ENCODE measurements at regions of chr13 and their contacts with region 1.

Region 1: GRCh38 chr13:109331898-109332297 is 454.5 kb downstream of the IRS2 start:
- DNase-seq: peak in 1 of 2 experiments; percentile 49
- H3K4me3 ChIP-seq: no peak overlapping the region
- H3K27ac ChIP-seq: no peak overlapping the region
- H3K4me1 ChIP-seq: peaks cover 23% of the 10 kb centered on the region
- H3K27me3 ChIP-seq: no peaks in the 10 kb centered on the region
- CTCF ChIP-seq: no peak

Region 2: GRCh38 chr13:109233293-109233692 is 98.6 kb before region 1 on chr13:
- CTCF ChIA-PET with region 1: no interaction called
- POLR2A ChIA-PET with region 1: no interaction called
- intact Hi-C with region 1: no loop called
- DNase-seq: no peak
- H3K4me3 ChIP-seq: no peak overlapping the region
- H3K27ac ChIP-seq: no peak overlapping the region
- H3K4me1 ChIP-seq: no peaks in the 10 kb centered on the region
- H3K27me3 ChIP-seq: no peaks in the 10 kb centered on the region
- CTCF ChIP-seq: no peak

Region 3: GRCh38 chr13:109743706-109744453 is 412.0 kb after region 1 on chr13:
- CTCF ChIA-PET with region 1: no interaction called
- POLR2A ChIA-PET with region 1: no interaction called
- intact Hi-C with region 1: loop called (anchors 10 kb)
- DNase-seq: peak; percentile 82 to 100
- H3K4me3 ChIP-seq: peak overlapping the region; percentile 37
- H3K27ac ChIP-seq: peak overlapping the region; percentile 94
- H3K4me1 ChIP-seq: peaks cover 45% of the 10 kb centered on the region
- H3K27me3 ChIP-seq: no peaks in the 10 kb centered on the region
- CTCF ChIP-seq: no peak

Region 4: DNA sequence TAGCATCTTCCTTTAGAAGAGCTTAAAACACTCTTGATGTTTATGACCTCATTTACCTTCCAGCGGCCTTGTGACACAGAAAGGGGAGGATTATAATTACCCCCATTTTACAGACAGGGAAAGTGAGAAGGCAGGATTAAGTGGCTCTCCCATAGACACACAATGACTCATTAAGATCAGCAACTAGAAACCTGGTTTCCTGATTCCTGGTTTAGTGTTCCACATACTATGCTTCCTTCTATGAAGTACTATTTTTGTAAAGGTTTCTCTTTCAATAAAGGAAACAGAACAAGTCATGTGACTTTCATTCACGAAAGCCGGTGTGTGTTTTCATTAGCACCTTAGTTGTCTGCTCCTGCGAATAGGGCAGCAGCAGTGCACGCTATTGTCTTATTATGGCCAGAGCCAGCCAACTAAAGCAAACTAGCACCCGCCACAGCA is 446.2 kb after region 1 on chr13:
- CTCF ChIA-PET with region 1: no interaction called
- POLR2A ChIA-PET with region 1: no interaction called
- intact Hi-C with region 1: loop called (anchors 10 kb)
- DNase-seq: peak; percentile 43 to 98
- H3K4me3 ChIP-seq: peak overlapping the region; percentile 87
- H3K27ac ChIP-seq: peak overlapping the region; percentile 83
- H3K4me1 ChIP-seq: peaks cover 58% of the 10 kb centered on the region
- H3K27me3 ChIP-seq: no peaks in the 10 kb centered on the region
- CTCF ChIP-seq: no peak

Region 5: DNA sequence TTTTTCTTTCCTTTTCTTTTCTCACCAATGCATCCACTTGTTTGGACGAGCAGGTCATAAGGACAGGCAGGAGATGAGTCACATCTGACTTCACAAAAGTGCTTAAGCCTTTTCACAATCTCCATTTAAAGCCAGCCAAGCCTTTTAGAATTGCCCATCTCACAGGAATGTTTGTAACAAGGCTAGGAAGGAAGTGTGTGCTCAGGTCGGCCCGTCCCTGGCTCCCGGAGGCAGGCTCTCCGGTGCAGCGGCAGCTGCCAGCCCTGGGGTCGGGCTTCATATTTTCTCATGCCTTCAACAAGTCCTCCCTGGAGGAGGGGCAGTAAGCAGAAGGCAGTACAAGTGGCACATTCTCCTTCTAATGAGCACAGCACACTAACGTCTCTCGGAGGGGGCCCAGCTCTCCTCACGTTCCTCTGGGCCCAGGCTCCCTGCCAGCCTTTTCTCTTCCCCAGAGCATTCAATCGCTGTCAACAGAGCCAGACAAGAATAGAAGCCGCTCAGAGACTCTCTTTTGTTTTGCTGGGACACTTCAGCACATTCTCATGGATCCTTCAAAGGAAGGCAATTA is 794.6 kb after region 1 on chr13:
- CTCF ChIA-PET with region 1: no interaction called
- POLR2A ChIA-PET with region 1: no interaction called
- intact Hi-C with region 1: loop called (anchors 10 kb)
- DNase-seq: peak; percentile 81 to 99
- H3K4me3 ChIP-seq: peak overlapping the region; percentile 33; the same call in 1 of the 2 replicates
- H3K27ac ChIP-seq: peak overlapping the region; percentile 94
- H3K4me1 ChIP-seq: peaks cover 42% of the 10 kb centered on the region
- H3K27me3 ChIP-seq: no peaks in the 10 kb centered on the region
- CTCF ChIP-seq: no peak

Measured in PC-9 (cell line).